ENCODE measurements at regions of chr1 and their contacts with region 1.

Region 1: GRCh38 chr1:50774759-50775351 is 185.2 kb downstream of the FAF1 start:
- DNase-seq: peak; percentile 42
- H3K4me3 ChIP-seq: no peak overlapping the region
- H3K27ac ChIP-seq: no peak overlapping the region
- H3K4me1 ChIP-seq: no peaks in the 10 kb centered on the region
- H3K27me3 ChIP-seq: no peaks in the 10 kb centered on the region
- CTCF ChIP-seq: peak; percentile 60 to 73

Region 2: DNA sequence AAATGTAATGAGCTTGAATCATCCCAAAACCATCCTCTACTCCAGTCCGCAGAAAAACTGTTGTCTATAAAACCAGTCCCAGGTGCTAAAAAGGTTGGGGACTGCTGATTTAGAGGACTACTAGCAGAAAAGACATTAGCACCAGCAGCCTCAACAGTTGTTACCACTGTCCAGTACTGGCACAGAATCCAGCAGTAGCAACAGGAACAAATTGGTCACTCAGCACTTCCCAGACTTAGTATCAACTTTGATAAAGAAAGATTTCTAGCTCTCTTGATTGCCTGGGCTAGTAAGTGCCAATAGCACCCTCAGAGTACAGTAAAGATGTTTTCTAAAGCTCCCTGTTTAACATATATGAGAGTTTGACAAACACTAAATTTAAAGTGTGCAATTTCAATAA is 57.3 kb after region 1 on chr1:
- CTCF ChIA-PET with region 1: no interaction called
- dilution Hi-C with region 1: no loop called
- in situ Hi-C with region 1: no loop called
- intact Hi-C with region 1: loop called (anchors 10 kb)
- DNase-seq: no peak
- H3K4me3 ChIP-seq: no peak overlapping the region
- H3K27ac ChIP-seq: no peak overlapping the region
- H3K4me1 ChIP-seq: no peaks in the 10 kb centered on the region
- H3K27me3 ChIP-seq: no peaks in the 10 kb centered on the region
- CTCF ChIP-seq: no peak

Region 3: DNA sequence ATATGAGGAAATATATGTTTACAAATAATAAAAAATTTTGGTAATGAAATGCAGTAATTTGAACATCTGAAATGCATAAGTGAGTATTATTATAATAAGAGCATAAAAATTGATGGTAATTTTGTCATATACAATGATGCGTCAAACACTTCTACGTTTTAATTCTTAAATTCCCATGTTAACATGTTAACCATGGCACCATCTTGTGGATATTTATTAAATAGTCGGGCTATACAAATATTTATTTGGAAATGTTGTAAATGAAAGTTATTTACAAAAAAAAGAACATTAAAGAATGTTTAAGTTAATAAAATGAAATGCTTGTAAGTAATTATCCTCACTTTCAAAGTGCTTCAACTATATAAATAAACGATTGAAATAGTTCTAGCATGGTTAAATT is 270.0 kb after region 1 on chr1:
- CTCF ChIA-PET with region 1: interaction called, 3 read pairs
- dilution Hi-C with region 1: no loop called
- in situ Hi-C with region 1: loop called in 1 of 2 experiments (anchors 25 kb)
- intact Hi-C with region 1: loop called (anchors 2 kb)
- DNase-seq: no peak
- H3K4me3 ChIP-seq: no peak overlapping the region
- H3K27ac ChIP-seq: no peak overlapping the region
- H3K4me1 ChIP-seq: no peaks in the 10 kb centered on the region
- H3K27me3 ChIP-seq: no peaks in the 10 kb centered on the region
- CTCF ChIP-seq: peak in 1 of 2 donors; percentile 34